ENCODE measurements at regions of chr7 and their contacts with region 1.

Region 1: GRCh38 chr7:64951250-64951848 is 39.5 kb downstream of the ZNF117 start:
- DNase-seq: no peak
- ATAC-seq: peak; percentile 68
- H3K4me3 Mint-ChIP-seq: no peak overlapping the region
- H3K27ac Mint-ChIP-seq: no peak overlapping the region
- H3K4me1 Mint-ChIP-seq: peaks cover 6% of the 10 kb centered on the region
- H3K27me3 Mint-ChIP-seq: peaks cover 29% of the 10 kb centered on the region
- CTCF ChIP-seq: peak; percentile 77

Region 2: DNA sequence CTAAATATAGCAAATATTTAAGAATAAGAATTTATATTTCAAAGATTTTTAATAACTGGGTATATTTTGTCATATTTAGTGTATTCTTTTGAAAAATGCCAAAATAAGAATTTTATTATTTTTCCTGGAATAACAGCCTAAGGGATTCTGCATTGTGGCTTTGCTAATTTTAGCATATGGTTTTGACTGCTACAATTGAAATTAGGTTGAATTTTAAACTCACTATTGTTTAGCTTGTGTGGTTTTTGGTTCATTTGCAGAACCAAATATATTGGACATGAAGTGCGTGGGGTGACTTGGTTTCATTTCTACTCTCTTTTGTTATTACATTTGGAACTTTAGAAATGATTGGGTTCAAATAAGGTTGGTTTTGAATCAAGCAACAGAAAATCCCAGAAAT is 12.8 kb before region 1 on chr7:
- CTCF ChIA-PET with region 1: interaction called, 13 read pairs
- POLR2A ChIA-PET with region 1: no interaction called
- intact Hi-C with region 1: no loop called
- DNase-seq: no peak
- ATAC-seq: no peak
- H3K4me3 Mint-ChIP-seq: no peak overlapping the region
- H3K27ac Mint-ChIP-seq: no peak overlapping the region
- H3K4me1 Mint-ChIP-seq: no peaks in the 10 kb centered on the region
- H3K27me3 Mint-ChIP-seq: peaks cover 2% of the 10 kb centered on the region
- CTCF ChIP-seq: no peak

Region 3: DNA sequence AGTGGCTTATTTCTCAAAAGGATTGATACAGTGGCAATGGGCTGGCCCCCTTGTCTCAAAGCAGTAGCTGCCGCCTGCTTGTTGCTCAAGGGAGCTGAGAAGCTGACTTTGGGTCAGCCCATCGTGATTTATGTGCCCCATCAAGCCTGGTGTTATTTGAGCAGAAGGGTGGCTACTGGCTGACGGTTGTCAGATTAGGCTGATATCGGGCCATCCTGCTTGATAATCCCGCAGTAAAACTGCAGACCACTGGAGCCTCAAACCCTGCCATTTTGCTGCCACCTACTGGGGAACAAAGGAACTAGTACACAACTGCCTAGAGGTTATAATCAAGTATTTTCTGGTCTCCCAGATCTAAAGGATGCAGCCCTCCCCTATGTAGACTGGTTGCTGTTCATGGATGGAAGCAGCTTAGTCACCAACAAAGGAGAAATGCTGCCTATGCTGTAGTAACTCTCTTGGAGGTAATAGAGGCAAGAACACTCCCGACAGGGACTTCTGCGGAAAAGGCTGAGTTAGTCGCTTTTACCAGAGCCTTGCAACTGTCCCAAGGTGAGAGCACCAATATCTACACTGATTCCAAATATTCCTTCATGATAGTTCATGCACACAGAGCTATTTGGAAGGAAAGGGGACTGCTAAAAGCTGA is 356.4 kb after region 1 on chr7:
- CTCF ChIA-PET with region 1: interaction called, 54 read pairs
- POLR2A ChIA-PET with region 1: no interaction called
- intact Hi-C with region 1: loop called (anchors 2 kb)
- DNase-seq: peak; percentile 60
- ATAC-seq: no peak
- H3K4me3 Mint-ChIP-seq: no peak overlapping the region
- H3K27ac Mint-ChIP-seq: no peak overlapping the region
- H3K4me1 Mint-ChIP-seq: no peaks in the 10 kb centered on the region
- H3K27me3 Mint-ChIP-seq: peaks cover 10% of the 10 kb centered on the region
- CTCF ChIP-seq: peak; percentile 72

Measured in activated CD8-positive, alpha-beta T cell treated with anti-CD3 and anti-CD28 coated beads for 36 hours (primary cell).